B cell (primary cell): ENCODE measurements at regions of chr19 and their contacts with region 1.

Region 1: DNA sequence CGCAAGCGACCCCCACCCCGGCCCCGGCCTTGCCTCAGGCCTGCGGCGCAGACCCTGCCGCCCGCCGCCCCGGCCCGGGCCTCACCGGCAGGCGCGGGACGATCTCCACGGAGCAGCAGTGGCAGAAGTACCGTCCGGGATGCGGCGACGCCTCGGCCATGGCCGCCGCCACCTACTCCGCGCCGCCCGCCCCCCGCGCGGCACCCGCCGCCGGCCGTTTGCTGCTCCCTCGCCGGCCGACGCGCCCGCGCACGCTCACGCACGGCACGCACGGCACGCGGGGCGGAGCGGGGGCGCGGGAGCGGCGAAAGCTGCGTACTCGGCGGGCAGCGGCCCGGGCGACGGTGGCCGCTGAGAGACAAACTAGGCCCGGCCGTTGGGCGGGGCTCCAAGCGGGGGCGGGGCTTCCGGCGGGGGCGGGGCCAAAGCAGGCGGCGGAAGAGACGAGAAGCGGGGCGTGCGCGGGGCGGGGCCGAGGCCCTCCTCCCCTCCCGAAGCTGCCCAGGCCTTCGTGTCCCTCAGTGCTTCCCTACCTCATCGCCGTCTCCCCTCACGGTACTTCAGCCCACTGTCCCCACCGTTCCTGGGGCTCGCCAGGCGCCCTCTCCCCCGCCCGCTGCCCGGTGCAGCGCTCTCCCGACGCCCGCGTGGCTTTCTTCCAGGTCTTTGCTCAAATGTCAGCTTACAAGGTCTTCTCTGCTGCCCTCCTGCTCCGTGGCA is at the start of gene RNF126:
- DNase-seq: peak; percentile 94
- ATAC-seq: peak; percentile 71
- H3K4me3 ChIP-seq: peak within 1 kb of the TSS; percentile 65 to 94 (median 82)
- H3K4me3 Mint-ChIP-seq: peak within 1 kb of the TSS; percentile 96
- H3K27ac ChIP-seq: peak within 1 kb of the TSS; percentile 87 to 97
- H3K27ac Mint-ChIP-seq: peak within 1 kb of the TSS; percentile 98
- H3K4me1 ChIP-seq: peaks cover 31 to 60% of the 10 kb centered on the region in 2 donors
- H3K4me1 Mint-ChIP-seq: peaks cover 45% of the 10 kb centered on the region
- H3K27me3 ChIP-seq: no peaks in the 10 kb centered on the region
- H3K27me3 Mint-ChIP-seq: no peaks in the 10 kb centered on the region
- CTCF ChIP-seq: no peak
- total RNA-seq, gene RNF126: 74.3 and 88.8 TPM in 2 replicates

Region 2: DNA sequence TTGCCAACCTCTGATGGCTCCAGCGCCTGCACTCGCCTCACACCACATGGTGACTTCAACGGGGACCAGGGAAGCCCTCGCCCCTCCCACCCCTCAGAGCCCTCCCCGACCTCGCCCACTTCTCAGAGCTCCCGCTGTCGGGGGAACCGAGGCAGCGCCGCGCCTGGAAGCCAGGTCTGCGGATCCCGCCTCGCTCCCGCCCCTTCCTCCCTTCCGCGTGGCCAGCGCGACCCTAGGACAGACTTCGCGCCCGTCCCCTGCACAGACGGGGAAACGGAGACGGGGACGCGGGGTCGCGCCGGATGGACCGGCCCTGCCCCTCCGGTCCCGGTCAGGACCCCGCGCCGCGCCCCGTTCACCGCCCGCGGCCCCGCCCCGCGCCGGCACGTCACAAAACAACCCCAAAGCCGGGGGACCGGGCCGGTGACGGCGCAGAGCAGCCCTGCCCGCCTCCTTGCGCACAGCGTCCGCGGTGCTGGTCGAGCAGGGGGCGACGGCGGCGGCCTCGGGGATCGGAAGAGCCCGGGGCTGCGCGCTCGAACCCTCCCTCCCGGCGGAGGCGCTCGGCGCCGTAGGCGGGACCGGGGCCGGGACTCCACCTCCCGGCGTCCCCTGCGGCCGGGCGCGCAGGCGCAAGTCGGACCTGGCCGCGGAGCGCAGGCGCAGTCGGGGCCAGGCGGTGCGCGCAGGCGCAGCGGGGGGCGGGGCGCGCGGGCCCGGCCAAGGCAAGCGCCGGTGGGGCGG is 131.9 kb before region 1 on chr19:
- CTCF ChIA-PET with region 1: no interaction called
- POLR2A ChIA-PET with region 1: no interaction called
- intact Hi-C with region 1: loop called (anchors 2 kb)
- DNase-seq: peak; percentile 94
- ATAC-seq: peak; percentile 80
- H3K4me3 ChIP-seq: peak overlapping the region in 4 of 5 experiments; percentile 73 to 83 (median 76)
- H3K4me3 Mint-ChIP-seq: peak overlapping the region; percentile 89
- H3K27ac ChIP-seq: peak overlapping the region; percentile 41 to 79
- H3K27ac Mint-ChIP-seq: peak overlapping the region; percentile 88
- H3K4me1 ChIP-seq: peaks cover 12 to 25% of the 10 kb centered on the region in 2 donors
- H3K4me1 Mint-ChIP-seq: peaks cover 13% of the 10 kb centered on the region
- H3K27me3 ChIP-seq: no peaks in the 10 kb centered on the region
- H3K27me3 Mint-ChIP-seq: peaks cover 6% of the 10 kb centered on the region
- CTCF ChIP-seq: no peak

Region 3: GRCh38 chr19:633068-633785 is 29.9 kb before region 1 on chr19 and contains the start of gene POLRMT:
- CTCF ChIA-PET with region 1: no interaction called
- POLR2A ChIA-PET with region 1: interaction called, 20 read pairs
- intact Hi-C with region 1: loop called (anchors 2 kb)
- DNase-seq: peak; percentile 99
- ATAC-seq: peak; percentile 96
- H3K4me3 ChIP-seq: peak within 1 kb of the TSS; percentile 72 to 93 (median 81)
- H3K4me3 Mint-ChIP-seq: peak within 1 kb of the TSS; percentile 91
- H3K27ac ChIP-seq: peak within 1 kb of the TSS; percentile 52 to 75
- H3K27ac Mint-ChIP-seq: peak within 1 kb of the TSS; percentile 89
- H3K4me1 ChIP-seq: peaks cover 14 to 41% of the 10 kb centered on the region in 2 donors
- H3K4me1 Mint-ChIP-seq: peaks cover 34% of the 10 kb centered on the region
- H3K27me3 ChIP-seq: peaks cover 0 to 2% (median 0%) of the 10 kb centered on the region in 4 experiments
- H3K27me3 Mint-ChIP-seq: no peaks in the 10 kb centered on the region
- CTCF ChIP-seq: no peak
- total RNA-seq, gene POLRMT: 73.2 and 77.8 TPM in 2 replicates

Region 4: DNA sequence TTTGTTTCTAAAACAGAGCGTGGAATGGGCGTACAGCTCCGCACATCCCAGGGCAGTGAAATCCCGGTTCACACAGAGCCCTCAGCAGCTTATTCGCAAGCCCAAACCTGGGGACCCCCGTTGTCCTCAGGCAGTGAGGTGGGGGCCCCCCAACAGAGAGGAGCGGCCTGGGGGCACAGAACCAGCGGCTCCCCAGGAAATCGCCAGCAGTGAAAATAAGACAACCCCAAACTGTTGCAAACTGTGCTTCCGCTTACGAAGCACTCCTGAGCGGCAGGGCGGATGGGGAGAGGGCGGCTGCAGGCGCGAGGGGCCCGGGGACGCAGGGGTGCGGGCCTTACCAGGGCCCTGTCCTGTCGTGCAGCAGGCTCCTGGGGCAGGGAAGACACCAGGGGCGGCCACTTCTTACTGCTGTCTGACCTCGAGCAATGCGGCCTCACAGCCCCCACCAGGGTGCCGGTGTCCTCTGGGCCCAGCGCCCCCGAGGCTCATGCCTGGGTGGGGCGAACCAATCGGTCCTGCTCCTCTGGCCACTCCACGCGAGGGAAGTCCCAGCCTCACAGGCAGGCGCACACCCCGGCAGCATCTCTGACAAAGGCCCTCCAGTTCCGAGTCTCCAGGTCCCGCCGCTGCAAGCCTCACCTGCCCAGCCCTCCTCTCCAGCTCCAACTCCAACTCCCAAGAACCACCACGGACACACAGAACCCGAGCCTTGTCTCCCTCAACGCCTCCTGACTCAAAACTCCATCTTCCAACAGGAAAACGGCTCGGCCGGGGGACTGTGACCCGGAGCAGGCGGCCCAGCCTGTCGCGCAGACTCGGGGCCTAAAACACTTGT is 17.3 kb before region 1 on chr19:
- CTCF ChIA-PET with region 1: interaction called, 6 read pairs
- POLR2A ChIA-PET with region 1: interaction called, 6 read pairs
- intact Hi-C with region 1: loop called (anchors 2 kb)
- DNase-seq: no peak
- ATAC-seq: no peak
- H3K4me3 ChIP-seq: no peak overlapping the region
- H3K4me3 Mint-ChIP-seq: no peak overlapping the region
- H3K27ac ChIP-seq: no peak overlapping the region
- H3K27ac Mint-ChIP-seq: peak overlapping the region; percentile 78
- H3K4me1 ChIP-seq: peaks cover 0 to 2% of the 10 kb centered on the region in 2 donors
- H3K4me1 Mint-ChIP-seq: peaks cover 11% of the 10 kb centered on the region
- H3K27me3 ChIP-seq: no peaks in the 10 kb centered on the region
- H3K27me3 Mint-ChIP-seq: no peaks in the 10 kb centered on the region
- CTCF ChIP-seq: no peak

Region 5: GRCh38 chr19:688214-688613 is 25.1 kb after region 1 on chr19:
- CTCF ChIA-PET with region 1: no interaction called
- POLR2A ChIA-PET with region 1: no interaction called
- intact Hi-C with region 1: no loop called
- DNase-seq: no peak
- ATAC-seq: no peak
- H3K4me3 ChIP-seq: no peak overlapping the region
- H3K4me3 Mint-ChIP-seq: no peak overlapping the region
- H3K27ac ChIP-seq: no peak overlapping the region
- H3K27ac Mint-ChIP-seq: no peak overlapping the region
- H3K4me1 ChIP-seq: no peaks in the 10 kb centered on the region
- H3K4me1 Mint-ChIP-seq: no peaks in the 10 kb centered on the region
- H3K27me3 ChIP-seq: no peaks in the 10 kb centered on the region
- H3K27me3 Mint-ChIP-seq: no peaks in the 10 kb centered on the region
- CTCF ChIP-seq: no peak

Region 6: DNA sequence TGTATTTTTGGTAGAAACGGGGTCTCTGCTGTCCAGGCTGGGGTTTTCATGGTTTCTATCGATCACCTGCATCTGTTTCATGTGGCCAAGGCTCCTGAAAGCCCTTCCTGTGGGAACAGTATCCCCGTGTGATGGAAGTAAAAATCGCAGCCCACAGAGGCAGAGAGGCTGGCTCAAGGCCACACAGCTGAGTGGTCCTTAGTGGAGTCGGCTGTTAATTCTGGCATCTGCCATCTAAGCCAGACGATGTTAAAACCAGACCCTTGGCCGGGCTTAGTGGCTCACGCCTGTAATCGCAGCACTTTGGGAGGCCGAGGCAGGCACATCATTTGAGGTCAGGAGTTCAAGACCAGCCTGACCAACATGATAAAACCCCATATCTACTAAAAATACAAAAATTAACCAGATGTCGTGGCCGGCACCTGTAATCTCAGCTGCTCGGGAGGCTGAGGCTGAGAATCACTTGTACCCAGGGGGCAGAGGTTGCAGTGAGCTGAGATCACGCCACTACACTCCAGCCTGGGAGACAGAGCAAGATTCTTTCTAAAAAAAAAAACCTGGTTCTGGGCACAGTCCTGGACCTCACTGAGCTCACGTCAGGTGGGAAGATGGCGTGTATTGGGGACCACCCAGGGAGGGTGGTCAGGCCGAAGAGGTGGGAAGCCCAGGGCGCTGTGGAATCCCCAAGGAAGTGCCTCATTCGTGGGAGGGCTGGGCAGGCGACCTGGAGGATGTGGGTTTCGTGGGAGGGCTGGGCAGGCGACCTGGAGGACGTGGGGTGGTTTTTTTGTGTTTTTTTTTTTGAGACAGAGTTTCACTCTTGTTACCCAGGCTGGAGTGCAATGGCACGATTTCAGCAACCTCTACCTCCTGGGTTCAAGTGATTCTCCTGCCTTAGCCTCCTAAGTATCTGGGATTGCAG is 69.3 kb after region 1 on chr19:
- CTCF ChIA-PET with region 1: interaction called, 17 read pairs
- POLR2A ChIA-PET with region 1: no interaction called
- intact Hi-C with region 1: no loop called
- DNase-seq: no peak
- ATAC-seq: no peak
- H3K4me3 ChIP-seq: no peak overlapping the region
- H3K4me3 Mint-ChIP-seq: no peak overlapping the region
- H3K27ac ChIP-seq: no peak overlapping the region
- H3K27ac Mint-ChIP-seq: no peak overlapping the region
- H3K4me1 ChIP-seq: no peaks in the 10 kb centered on the region
- H3K4me1 Mint-ChIP-seq: peaks cover 4% of the 10 kb centered on the region
- H3K27me3 ChIP-seq: peaks cover 0 to 4% (median 0%) of the 10 kb centered on the region in 4 experiments
- H3K27me3 Mint-ChIP-seq: peaks cover 3% of the 10 kb centered on the region
- CTCF ChIP-seq: no peak